CD4-positive, alpha-beta memory T cell (primary cell): ENCODE measurements at regions of chr6 and their contacts with region 1.

Region 1: GRCh38 chr6:116287689-116288282 is 8.1 kb upstream of the TSPYL1 start:
- DNase-seq: peak in 4 of 5 donors; percentile 45 to 52 (median 48)
- H3K4me3 ChIP-seq: no peak overlapping the region
- H3K4me3 Mint-ChIP-seq: no peak overlapping the region
- H3K27ac ChIP-seq: no peak overlapping the region
- H3K27ac Mint-ChIP-seq: no peak overlapping the region
- H3K4me1 ChIP-seq: no peaks in the 10 kb centered on the region
- H3K4me1 Mint-ChIP-seq: peaks cover 0 to 4% (median 0%) of the 10 kb centered on the region in 4 donors
- H3K27me3 ChIP-seq: no peaks in the 10 kb centered on the region
- H3K27me3 Mint-ChIP-seq: no peaks in the 10 kb centered on the region

Region 2: DNA sequence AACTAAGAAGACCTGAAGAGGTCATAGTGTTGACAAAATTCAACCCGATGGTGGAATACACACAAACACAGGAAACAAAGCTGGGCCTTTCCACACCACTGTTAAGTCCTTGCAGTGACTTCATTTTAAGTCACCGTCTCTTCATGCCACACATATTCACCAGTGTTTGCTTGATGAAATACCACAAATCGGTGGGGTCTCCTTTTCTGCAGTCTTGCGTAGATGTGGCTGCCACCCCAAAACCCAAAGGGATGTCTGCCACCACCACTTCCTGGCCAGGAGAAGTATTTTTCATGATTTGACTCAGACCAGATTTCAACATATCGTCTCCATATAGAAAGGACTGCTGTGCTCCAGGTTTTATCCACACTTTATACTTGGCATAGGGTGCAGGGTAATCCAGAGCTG is 150.8 kb before region 1 on chr6:
- CTCF ChIA-PET with region 1: no interaction called
- POLR2A ChIA-PET with region 1: no interaction called
- intact Hi-C with region 1: no loop called
- DNase-seq: peak; percentile 1 to 45 (median 17)
- H3K4me3 ChIP-seq: no peak overlapping the region
- H3K4me3 Mint-ChIP-seq: no peak overlapping the region
- H3K27ac ChIP-seq: no peak overlapping the region
- H3K27ac Mint-ChIP-seq: peak overlapping the region in 2 of 7 donors; percentile 18 to 53
- H3K4me1 ChIP-seq: peaks cover 6% of the 10 kb centered on the region
- H3K4me1 Mint-ChIP-seq: peaks cover 9 to 11% (median 10%) of the 10 kb centered on the region in 4 donors
- H3K27me3 ChIP-seq: no peaks in the 10 kb centered on the region
- H3K27me3 Mint-ChIP-seq: no peaks in the 10 kb centered on the region

Region 3: GRCh38 chr6:116268589-116269293 is 19.0 kb before region 1 on chr6:
- CTCF ChIA-PET with region 1: interaction called, 48 read pairs
- POLR2A ChIA-PET with region 1: no interaction called
- intact Hi-C with region 1: no loop called
- DNase-seq: peak in 4 of 5 donors; percentile 44 to 50 (median 46)
- H3K4me3 ChIP-seq: no peak overlapping the region
- H3K4me3 Mint-ChIP-seq: no peak overlapping the region
- H3K27ac ChIP-seq: no peak overlapping the region
- H3K27ac Mint-ChIP-seq: peak overlapping the region; percentile 4 to 82 (median 65)
- H3K4me1 ChIP-seq: peaks cover 25% of the 10 kb centered on the region
- H3K4me1 Mint-ChIP-seq: peaks cover 16 to 29% (median 24%) of the 10 kb centered on the region in 4 donors
- H3K27me3 ChIP-seq: no peaks in the 10 kb centered on the region
- H3K27me3 Mint-ChIP-seq: no peaks in the 10 kb centered on the region

Region 4: DNA sequence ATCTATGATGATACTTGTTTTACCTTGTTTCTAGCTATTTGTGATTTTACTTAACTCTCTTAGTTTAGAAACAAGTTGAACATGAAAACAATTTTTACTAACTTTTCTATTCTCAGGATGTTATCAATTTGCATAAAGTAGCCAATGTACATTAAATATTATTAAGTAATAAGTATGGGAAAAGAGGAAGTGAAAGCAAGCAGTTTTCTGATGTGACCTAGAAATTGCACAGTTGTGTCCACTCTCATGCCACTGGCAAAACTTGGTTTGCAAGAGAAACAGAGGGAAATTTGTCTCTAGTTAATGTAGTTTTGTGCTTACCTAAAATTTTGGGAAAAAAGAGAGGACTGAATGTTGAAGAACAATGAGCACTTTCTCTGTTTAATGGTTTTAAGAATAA is 11.2 kb after region 1 on chr6:
- CTCF ChIA-PET with region 1: interaction called, 10 read pairs
- POLR2A ChIA-PET with region 1: no interaction called
- intact Hi-C with region 1: no loop called
- DNase-seq: no peak
- H3K4me3 ChIP-seq: no peak overlapping the region
- H3K4me3 Mint-ChIP-seq: no peak overlapping the region
- H3K27ac ChIP-seq: no peak overlapping the region
- H3K27ac Mint-ChIP-seq: no peak overlapping the region
- H3K4me1 ChIP-seq: no peaks in the 10 kb centered on the region
- H3K4me1 Mint-ChIP-seq: no peaks in the 10 kb centered on the region
- H3K27me3 ChIP-seq: no peaks in the 10 kb centered on the region
- H3K27me3 Mint-ChIP-seq: no peaks in the 10 kb centered on the region

Region 5: DNA sequence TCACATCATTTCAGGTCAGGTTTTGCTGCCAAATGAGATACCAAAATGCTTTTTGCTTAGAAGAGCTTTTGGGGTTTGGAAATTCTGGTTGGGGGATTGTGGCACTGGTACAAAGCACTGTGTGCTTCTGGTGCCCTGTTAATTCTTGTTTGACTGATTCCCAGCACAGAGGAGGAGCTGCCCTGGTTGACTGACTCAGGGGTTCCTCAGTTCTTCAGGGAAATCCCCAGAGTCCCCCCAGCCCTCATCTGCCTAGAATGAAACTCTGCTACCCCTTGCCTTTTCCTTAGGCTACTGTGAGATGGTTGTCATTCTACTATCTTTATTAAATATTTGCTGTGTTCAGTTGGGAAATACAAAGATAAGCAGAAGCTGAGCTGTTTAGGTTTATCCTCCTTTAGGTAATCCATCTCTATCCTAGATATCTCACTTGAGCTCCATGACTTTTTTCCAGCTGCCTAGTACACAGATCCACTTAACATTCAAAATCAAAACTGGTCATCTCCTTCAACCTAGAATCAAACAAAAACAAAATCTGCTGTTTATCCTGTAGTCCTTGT is 16.8 kb after region 1 on chr6:
- CTCF ChIA-PET with region 1: interaction called, 12 read pairs
- POLR2A ChIA-PET with region 1: no interaction called
- intact Hi-C with region 1: no loop called
- DNase-seq: no peak
- H3K4me3 ChIP-seq: no peak overlapping the region
- H3K4me3 Mint-ChIP-seq: no peak overlapping the region
- H3K27ac ChIP-seq: no peak overlapping the region
- H3K27ac Mint-ChIP-seq: peak overlapping the region in 1 of 7 donors; percentile 58
- H3K4me1 ChIP-seq: no peaks in the 10 kb centered on the region
- H3K4me1 Mint-ChIP-seq: no peaks in the 10 kb centered on the region
- H3K27me3 ChIP-seq: no peaks in the 10 kb centered on the region
- H3K27me3 Mint-ChIP-seq: no peaks in the 10 kb centered on the region

Region 6: GRCh38 chr6:116561377-116562018 is 273.7 kb after region 1 on chr6:
- CTCF ChIA-PET with region 1: interaction called, 16 read pairs
- POLR2A ChIA-PET with region 1: no interaction called
- intact Hi-C with region 1: loop called (anchors 1 kb)
- DNase-seq: peak; percentile 59 to 69 (median 64)
- H3K4me3 ChIP-seq: no peak overlapping the region
- H3K4me3 Mint-ChIP-seq: no peak overlapping the region
- H3K27ac ChIP-seq: no peak overlapping the region
- H3K27ac Mint-ChIP-seq: peak overlapping the region in 2 of 7 donors; percentile 24 to 63
- H3K4me1 ChIP-seq: no peaks in the 10 kb centered on the region
- H3K4me1 Mint-ChIP-seq: peaks cover 0 to 2% (median 1%) of the 10 kb centered on the region in 4 donors
- H3K27me3 ChIP-seq: no peaks in the 10 kb centered on the region
- H3K27me3 Mint-ChIP-seq: peaks cover 9 to 16% of the 10 kb centered on the region in 2 donors